Naive thymus-derived CD8-positive, alpha-beta T cell (primary cell): ENCODE measurements at regions of chr1 and their contacts with region 1.

Region 1: GRCh38 chr1:111448918-111449702 is at the starts of genes ATP5PB and WDR77:
- DNase-seq: peak; percentile 71 to 96 (median 92)
- ATAC-seq: peak; percentile 93 to 95
- H3K4me3 Mint-ChIP-seq: peak within 1 kb of the TSS; percentile 94 to 100 (median 100)
- H3K27ac Mint-ChIP-seq: peak within 1 kb of the TSS; percentile 98 to 100 (median 99)
- H3K4me1 Mint-ChIP-seq: peaks cover 39 to 84% (median 79%) of the 10 kb centered on the region in 4 donors
- H3K27me3 Mint-ChIP-seq: no peaks in the 10 kb centered on the region
- polyA plus RNA-seq, gene ATP5PB: 411 to 437 (median 416) TPM
- polyA plus RNA-seq, gene WDR77: 36.9 to 44.6 (median 43.9) TPM

Region 2: DNA sequence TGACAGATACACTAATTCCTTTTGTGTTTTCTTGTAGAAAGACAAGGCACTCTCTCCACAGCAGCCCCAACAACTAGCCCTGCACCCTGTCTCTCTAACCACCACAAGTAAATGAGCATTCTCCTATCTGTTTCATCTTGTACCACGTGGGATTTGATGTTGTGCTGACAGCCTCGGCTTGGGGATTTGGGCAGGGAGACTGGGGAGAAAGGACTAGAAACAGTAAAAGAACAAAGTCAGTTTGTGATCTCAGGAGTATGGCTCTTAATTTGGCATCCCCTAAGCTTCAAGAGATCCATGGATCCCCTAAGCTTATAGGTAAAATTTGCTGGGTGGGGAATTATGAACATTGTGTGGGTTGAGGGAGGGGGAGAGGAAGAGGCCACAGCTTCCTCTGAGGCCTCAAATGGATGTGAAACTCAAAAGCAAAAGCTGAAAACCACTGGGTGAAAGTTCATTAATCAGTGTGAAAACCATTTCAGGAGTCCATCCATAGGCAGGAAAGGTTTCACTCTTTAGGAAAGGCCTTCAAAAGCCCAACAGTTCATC is 27.7 kb after region 1 on chr1:
- POLR2A ChIA-PET with region 1: interaction called, 32 read pairs
- DNase-seq: peak in 9 of 10 donors; percentile 14 to 76 (median 42)
- ATAC-seq: peak; percentile 84 to 90
- H3K4me3 Mint-ChIP-seq: peak overlapping the region in 9 of 10 donors; percentile 71 to 95 (median 87)
- H3K27ac Mint-ChIP-seq: peak overlapping the region in 8 of 10 donors; percentile 89 to 98 (median 95)
- H3K4me1 Mint-ChIP-seq: peaks cover 28 to 75% (median 56%) of the 10 kb centered on the region in 4 donors
- H3K27me3 Mint-ChIP-seq: no peaks in the 10 kb centered on the region